ENCODE measurements at regions of chr19 and their contacts with region 1.

Region 1: DNA sequence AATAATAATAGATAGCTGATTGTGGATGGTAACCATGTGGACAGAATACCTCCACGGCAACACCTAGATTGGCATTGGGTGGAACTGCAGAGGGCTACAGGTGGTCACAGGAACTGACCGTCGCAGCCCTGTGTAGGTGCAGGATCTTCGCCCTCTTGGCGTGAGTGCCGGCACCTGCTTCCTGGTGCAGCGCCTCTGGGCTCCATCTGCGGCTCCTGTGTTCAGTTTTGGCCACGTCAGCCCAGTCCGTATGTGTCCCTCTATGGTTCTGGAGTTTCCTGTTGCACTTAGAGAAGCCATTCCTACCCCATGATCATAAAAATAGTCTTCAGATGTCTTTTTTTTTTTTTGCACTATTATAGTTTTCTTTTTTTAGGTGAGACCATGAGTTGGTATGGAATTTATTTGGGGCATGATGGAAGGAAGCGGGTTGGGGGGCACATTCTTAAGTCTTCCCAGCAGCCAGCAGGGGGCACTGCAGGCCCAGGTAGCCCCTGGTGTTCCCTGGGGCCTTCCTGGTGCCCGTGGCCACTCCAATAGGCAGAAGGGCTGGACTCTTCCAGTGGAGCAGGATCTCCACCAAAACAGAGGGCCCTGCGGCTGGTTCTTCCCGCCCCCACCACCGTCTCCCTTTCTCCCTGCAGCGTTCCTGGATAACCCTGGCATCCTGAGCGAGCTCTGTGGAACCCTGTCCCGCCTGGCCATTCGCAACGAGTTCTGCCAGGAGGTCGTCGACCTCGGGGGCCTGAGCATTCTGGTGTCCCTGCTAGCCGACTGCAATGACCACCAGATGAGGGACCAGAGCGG is 10.1 kb upstream of the SLC25A42 start:
- DNase-seq: peak; percentile 82
- H3K4me3 ChIP-seq: no peak overlapping the region; a peak in 1 of 4 replicates
- H3K27ac ChIP-seq: no peak overlapping the region
- H3K4me1 ChIP-seq: no peaks in the 10 kb centered on the region
- H3K27me3 ChIP-seq: no peaks in the 10 kb centered on the region
- CTCF ChIP-seq: peak; percentile 84
- EP300 ChIP-seq: no peak
- RAD21 ChIP-seq: peak; percentile 72

Region 2: GRCh38 chr19:18972301-18972811 is 81.4 kb before region 1 on chr19:
- CTCF ChIA-PET with region 1: no interaction called
- POLR2A ChIA-PET with region 1: no interaction called
- DNase-seq: no peak
- H3K4me3 ChIP-seq: no peak overlapping the region
- H3K27ac ChIP-seq: no peak overlapping the region
- H3K4me1 ChIP-seq: peaks cover 0 to 15% of the 10 kb centered on the region in 2 experiments; a peak in 2 of 4 replicates
- H3K27me3 ChIP-seq: no peaks in the 10 kb centered on the region
- CTCF ChIP-seq: no peak
- EP300 ChIP-seq: no peak
- RAD21 ChIP-seq: no peak

Region 3: DNA sequence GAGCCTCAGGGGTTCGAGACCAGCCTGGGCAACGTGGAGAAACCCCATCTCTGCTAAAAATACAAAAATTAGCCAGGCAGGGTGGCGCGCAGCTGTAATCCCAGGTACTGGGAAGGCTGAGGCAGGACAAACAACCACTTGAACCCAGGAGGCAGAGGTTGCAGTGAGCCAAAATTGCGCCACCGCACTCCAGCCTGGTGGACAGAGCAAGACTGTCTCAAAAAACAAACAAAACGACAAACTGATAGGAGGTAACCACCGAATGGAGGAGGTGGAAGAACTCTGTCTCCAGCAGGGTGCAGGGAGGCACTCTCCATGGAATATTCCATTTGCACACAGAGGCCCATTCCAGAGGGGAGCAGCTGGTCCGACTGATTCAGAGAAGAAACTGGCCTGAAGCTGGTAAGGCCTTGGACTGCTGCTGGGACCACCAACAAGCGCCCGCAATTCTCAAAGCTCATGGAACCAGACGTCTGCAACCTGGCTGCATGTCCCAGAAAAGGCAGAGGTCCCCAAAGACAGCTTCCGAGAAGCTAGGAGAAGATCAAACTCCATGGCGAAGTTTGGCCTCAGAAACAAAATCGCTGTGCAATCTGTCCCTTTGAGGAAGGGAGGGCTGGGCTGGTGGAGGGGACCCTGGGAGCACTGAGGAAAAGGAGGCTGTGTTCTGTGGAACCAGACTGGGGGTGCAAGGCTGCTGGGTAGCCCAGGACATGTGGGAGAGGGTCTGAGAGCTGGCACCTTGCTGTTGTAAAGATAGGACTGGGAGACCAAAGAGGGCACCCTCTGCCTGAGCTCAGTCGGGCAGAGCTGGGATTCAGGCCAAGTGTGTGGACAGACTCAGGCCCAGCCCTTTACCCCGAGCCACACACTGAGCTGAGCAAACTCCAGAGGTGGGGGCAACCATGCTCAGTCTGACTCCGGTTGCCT is 45.3 kb after region 1 on chr19:
- CTCF ChIA-PET with region 1: no interaction called
- POLR2A ChIA-PET with region 1: no interaction called
- DNase-seq: no peak
- H3K4me3 ChIP-seq: no peak overlapping the region
- H3K27ac ChIP-seq: no peak overlapping the region
- H3K4me1 ChIP-seq: no peaks in the 10 kb centered on the region
- H3K27me3 ChIP-seq: no peaks in the 10 kb centered on the region
- CTCF ChIP-seq: no peak
- EP300 ChIP-seq: no peak
- RAD21 ChIP-seq: no peak

Region 4: GRCh38 chr19:19115954-19116353 is 62.2 kb after region 1 on chr19:
- CTCF ChIA-PET with region 1: interaction called, 13 read pairs
- POLR2A ChIA-PET with region 1: no interaction called
- DNase-seq: peak; percentile 72
- H3K4me3 ChIP-seq: no peak overlapping the region; a peak in 1 of 4 replicates
- H3K27ac ChIP-seq: no peak overlapping the region
- H3K4me1 ChIP-seq: no peaks in the 10 kb centered on the region; a peak in 1 of 4 replicates
- H3K27me3 ChIP-seq: no peaks in the 10 kb centered on the region
- CTCF ChIP-seq: peak; percentile 60
- EP300 ChIP-seq: no peak
- RAD21 ChIP-seq: no peak

Region 5: DNA sequence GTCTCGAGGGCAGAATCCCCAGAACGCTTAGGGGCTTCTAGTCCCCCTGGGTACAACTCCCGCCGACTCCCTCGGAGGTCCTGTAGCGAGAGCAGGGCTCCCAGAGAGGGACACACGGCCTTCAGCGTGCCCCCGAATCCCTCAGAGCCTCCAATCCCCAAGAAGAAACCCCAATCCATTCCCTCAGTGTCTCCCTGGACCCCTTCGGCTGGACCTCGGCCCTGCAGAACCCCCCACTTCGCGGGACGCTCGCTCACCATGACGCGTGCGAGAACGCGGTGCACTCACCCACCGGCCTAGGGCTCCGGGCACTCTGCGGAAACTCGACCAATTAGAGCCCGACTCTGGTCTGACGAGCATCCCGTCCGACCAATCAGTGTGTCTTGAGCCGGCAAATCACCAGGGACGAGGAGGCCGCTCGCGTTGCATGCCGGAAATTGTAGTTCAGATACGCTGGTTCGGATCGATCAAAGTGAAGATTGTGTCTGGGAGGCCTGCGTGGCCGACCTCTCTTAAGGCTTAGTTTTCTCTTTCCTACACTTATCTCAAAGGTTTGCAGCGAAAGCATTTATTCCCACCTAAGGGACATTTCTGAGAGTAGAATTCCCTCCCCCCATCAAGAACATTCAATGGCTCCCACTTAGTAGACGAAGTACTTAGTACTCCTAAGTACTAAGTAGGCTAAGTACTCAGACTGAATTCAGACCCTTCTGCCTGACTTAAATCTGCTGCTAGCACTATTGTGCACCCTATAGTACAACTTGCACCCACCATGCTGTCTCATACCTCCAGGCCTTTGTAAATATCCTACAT is 84.7 kb after region 1 on chr19 and contains the start of gene TMEM161A:
- CTCF ChIA-PET with region 1: interaction called, 34 read pairs
- POLR2A ChIA-PET with region 1: no interaction called
- DNase-seq: peak; percentile 100
- H3K4me3 ChIP-seq: peak within 1 kb of the TSS; percentile 68 to 89
- H3K27ac ChIP-seq: peak within 1 kb of the TSS; percentile 48 to 51; a peak in 2 of 4 replicates
- H3K4me1 ChIP-seq: peaks cover 0 to 8% of the 10 kb centered on the region in 2 experiments; a peak in 2 of 4 replicates
- H3K27me3 ChIP-seq: no peaks in the 10 kb centered on the region
- CTCF ChIP-seq: no peak
- EP300 ChIP-seq: no peak
- RAD21 ChIP-seq: no peak
- polyA plus RNA-seq, gene TMEM161A: 37.8 and 39.3 TPM in 2 replicates

Measured in SK-N-SH (cell line).